Caco-2 (cell line): ENCODE measurements at regions of chr2 and their contacts with region 1.

Region 1: DNA sequence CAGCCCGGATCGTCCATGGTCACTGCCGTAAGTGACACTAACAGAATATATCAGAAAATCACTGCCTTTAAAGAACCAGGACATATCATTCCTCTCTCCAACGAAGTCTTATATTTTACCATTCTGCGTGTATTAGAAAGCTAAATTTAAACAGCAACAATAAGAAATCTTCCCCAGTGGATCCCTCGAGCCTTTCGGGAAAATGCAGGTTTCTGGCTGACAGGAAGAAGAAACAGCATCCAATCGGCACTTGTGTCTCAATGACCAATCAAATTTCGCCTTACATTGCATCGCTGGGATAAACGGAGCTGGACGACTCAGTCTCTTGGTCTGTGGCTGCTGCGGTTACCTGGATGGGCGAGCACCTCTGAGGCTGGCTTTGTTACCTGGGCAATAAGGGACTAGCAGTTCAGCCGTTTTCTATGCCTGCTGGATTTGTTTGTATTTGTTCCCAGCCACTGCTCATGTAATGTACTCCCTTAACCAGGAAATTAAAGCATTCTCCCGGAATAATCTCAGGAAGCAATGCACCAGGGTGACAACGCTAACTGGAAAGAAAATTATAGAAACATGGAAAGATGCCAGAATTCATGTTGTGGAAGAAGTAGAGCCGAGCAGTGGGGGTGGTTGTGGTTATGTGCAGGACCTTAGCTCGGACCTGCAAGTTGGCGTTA is at the start of gene DUSP19:
- DNase-seq: peak; percentile 97
- H3K4me3 ChIP-seq: peak within 1 kb of the TSS; percentile 53
- H3K4me3 Mint-ChIP-seq: peak within 1 kb of the TSS; percentile 92
- H3K27ac Mint-ChIP-seq: peak within 1 kb of the TSS; percentile 66
- H3K4me1 ChIP-seq: peaks cover 8% of the 10 kb centered on the region; the same call in 1 of the 2 replicates
- H3K4me1 Mint-ChIP-seq: no peaks in the 10 kb centered on the region
- H3K27me3 ChIP-seq: no peaks in the 10 kb centered on the region
- H3K27me3 Mint-ChIP-seq: no peaks in the 10 kb centered on the region
- CTCF ChIP-seq: no peak
- total RNA-seq, gene DUSP19: 3.6 and 3.9 TPM in 2 replicates

Region 2: DNA sequence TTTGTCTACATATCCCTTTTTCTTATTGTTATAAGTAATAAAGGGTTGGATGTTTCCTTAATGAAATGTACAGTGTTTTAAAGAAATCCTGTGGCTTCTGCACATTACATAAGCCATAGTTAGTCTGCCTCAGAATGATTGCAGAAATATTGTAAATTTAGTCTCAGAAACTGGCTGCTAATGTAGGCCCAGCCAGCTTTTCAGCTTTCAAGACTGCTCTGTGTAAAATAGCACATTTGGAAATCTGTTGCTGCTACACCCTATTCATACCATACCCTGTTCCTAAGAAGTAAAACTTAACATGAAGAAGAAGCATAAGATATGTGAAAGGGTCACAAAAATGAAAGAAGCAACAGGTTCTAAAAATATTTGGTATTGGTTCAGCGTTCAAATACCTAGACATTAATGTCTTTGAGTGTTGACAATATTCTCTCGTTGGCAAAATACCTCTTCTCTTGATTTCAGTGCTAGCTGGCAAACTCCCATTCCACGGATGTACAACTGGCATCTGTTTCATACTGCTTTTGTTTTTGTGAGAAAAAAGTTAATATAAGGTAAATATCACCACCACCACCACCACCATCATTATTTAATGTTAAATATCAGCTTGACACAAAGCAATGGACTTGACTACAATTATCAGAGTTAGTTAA is 21.1 kb before region 1 on chr2:
- CTCF ChIA-PET with region 1: no interaction called
- POLR2A ChIA-PET with region 1: no interaction called
- intact Hi-C with region 1: loop called (anchors 1 kb)
- DNase-seq: no peak
- H3K4me3 ChIP-seq: no peak overlapping the region
- H3K4me3 Mint-ChIP-seq: no peak overlapping the region
- H3K27ac Mint-ChIP-seq: no peak overlapping the region
- H3K4me1 ChIP-seq: peaks cover 42% of the 10 kb centered on the region
- H3K4me1 Mint-ChIP-seq: peaks cover 18% of the 10 kb centered on the region
- H3K27me3 ChIP-seq: no peaks in the 10 kb centered on the region
- H3K27me3 Mint-ChIP-seq: no peaks in the 10 kb centered on the region
- CTCF ChIP-seq: no peak

Region 3: GRCh38 chr2:183105402-183106134 is 27.0 kb after region 1 on chr2:
- CTCF ChIA-PET with region 1: no interaction called
- POLR2A ChIA-PET with region 1: no interaction called
- intact Hi-C with region 1: no loop called
- DNase-seq: no peak
- H3K4me3 ChIP-seq: no peak overlapping the region
- H3K4me3 Mint-ChIP-seq: no peak overlapping the region
- H3K27ac Mint-ChIP-seq: no peak overlapping the region
- H3K4me1 ChIP-seq: no peaks in the 10 kb centered on the region
- H3K4me1 Mint-ChIP-seq: no peaks in the 10 kb centered on the region
- H3K27me3 ChIP-seq: no peaks in the 10 kb centered on the region
- H3K27me3 Mint-ChIP-seq: no peaks in the 10 kb centered on the region
- CTCF ChIP-seq: no peak

Region 4: DNA sequence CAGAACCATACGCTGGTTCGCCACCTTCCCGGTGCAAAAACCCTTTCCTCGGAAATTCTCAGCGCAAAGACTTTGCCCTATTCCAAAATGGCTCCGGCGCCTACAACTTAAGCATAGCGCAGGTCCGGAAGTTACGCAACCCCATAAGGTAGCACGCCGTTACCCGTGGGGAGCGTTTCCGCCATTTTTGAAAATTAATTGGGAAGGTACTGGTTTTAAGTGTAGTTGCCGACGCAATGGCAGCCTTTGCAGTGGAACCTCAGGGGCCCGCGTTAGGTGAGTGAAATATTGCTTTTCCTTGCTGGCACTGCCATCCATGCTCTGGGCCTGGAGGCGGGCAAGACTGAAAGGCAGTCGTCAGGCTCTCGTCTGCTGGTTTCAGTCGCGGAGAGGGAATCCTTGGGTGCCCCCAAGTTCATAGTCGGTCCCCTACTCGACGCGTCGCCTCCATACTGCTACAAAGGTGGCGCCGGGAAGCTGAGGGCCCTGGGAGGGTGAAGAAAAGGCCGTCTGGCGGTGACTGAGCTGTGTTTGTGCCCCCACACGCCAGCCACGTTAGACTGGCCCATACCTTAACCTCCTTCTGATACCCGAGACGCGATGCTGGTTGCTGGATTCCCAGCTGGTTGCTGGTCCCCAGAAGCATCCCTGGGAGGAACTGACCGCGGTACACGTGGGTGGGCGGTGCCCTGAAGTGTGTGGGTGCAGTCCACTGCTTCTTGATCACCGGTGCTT is 45.8 kb after region 1 on chr2 and contains the start of gene NUP35:
- CTCF ChIA-PET with region 1: no interaction called
- POLR2A ChIA-PET with region 1: interaction called, 3 read pairs
- intact Hi-C with region 1: loop called (anchors 1 kb)
- DNase-seq: peak; percentile 91 to 92
- H3K4me3 ChIP-seq: peak within 1 kb of the TSS; percentile 73
- H3K4me3 Mint-ChIP-seq: peak within 1 kb of the TSS; percentile 96
- H3K27ac Mint-ChIP-seq: peak within 1 kb of the TSS; percentile 98
- H3K4me1 ChIP-seq: 0 out of 2 replicates have a peak, but pooled peaks cover 5% of the 10 kb centered on the region
- H3K4me1 Mint-ChIP-seq: peaks cover 14% of the 10 kb centered on the region
- H3K27me3 ChIP-seq: no peaks in the 10 kb centered on the region
- H3K27me3 Mint-ChIP-seq: no peaks in the 10 kb centered on the region
- CTCF ChIP-seq: no peak
- total RNA-seq, gene NUP35: 34.7 and 36.1 TPM in 2 replicates

Region 5: GRCh38 chr2:183339311-183339710 is 260.7 kb after region 1 on chr2:
- CTCF ChIA-PET with region 1: no interaction called
- POLR2A ChIA-PET with region 1: no interaction called
- intact Hi-C with region 1: no loop called
- DNase-seq: no peak
- H3K4me3 ChIP-seq: no peak overlapping the region
- H3K4me3 Mint-ChIP-seq: no peak overlapping the region
- H3K27ac Mint-ChIP-seq: no peak overlapping the region
- H3K4me1 ChIP-seq: no peaks in the 10 kb centered on the region
- H3K4me1 Mint-ChIP-seq: no peaks in the 10 kb centered on the region
- H3K27me3 ChIP-seq: no peaks in the 10 kb centered on the region
- H3K27me3 Mint-ChIP-seq: peaks cover 2% of the 10 kb centered on the region
- CTCF ChIP-seq: no peak